GM12878 (cell line): ENCODE measurements at regions of chr16 and their contacts with region 1.

Region 1: GRCh38 chr16:9929313-9929712 is 252.9 kb downstream of the GRIN2A start:
- DNase-seq: peak; percentile 52
- ATAC-seq: peak; percentile 98
- H3K4me3 ChIP-seq: no peak overlapping the region
- H3K27ac ChIP-seq: no peak overlapping the region
- H3K4me1 ChIP-seq: peaks cover 9% of the 10 kb centered on the region
- H3K27me3 ChIP-seq: no peaks in the 10 kb centered on the region
- CTCF ChIP-seq: no peak
- EP300 ChIP-seq: peak; percentile 33 to 80; a peak in 2 of 4 replicates
- POLR2A ChIP-seq: no peak
- RAD21 ChIP-seq: no peak

Region 2: DNA sequence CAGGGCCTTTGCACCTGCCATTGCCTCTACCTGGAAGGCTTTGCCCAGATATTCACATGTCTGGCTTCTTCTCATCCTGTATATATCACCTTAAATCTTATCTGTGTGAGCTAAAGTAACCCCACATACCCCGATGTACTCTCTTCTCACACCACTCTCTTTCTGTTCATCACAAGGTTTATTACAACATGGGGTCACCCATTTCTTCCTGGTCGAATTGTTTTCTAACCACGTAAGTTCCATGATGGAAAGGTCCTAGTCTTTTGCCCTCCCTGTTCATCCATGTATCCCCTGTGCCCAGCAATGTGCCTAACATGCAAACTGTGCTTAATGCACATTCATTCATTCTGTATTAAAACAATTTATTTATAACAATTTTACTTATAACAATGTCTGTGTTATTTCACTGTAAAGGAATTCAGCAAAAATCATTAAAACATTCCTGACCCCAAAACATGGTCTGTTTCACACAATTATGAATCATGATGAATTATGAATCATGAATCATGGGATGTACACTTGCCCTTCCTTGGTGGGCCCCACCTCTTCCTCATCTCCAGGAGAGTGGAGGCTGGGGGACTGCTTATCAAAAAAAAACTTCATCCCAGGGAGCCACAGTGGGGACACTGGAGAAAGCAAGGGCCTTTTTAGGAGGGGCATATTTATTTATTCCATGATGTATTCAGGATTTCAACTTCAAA is 83.5 kb before region 1 on chr16:
- CTCF ChIA-PET with region 1: no interaction called
- POLR2A ChIA-PET with region 1: no interaction called
- RAD21 ChIA-PET with region 1: interaction called, 13 read pairs
- SMC1A ChIA-PET with region 1: interaction called, 7 read pairs
- in situ Hi-C with region 1: no loop called
- intact Hi-C with region 1: no loop called
- DNase-seq: no peak
- ATAC-seq: no peak
- H3K4me3 ChIP-seq: no peak overlapping the region
- H3K27ac ChIP-seq: no peak overlapping the region
- H3K4me1 ChIP-seq: peaks cover 30% of the 10 kb centered on the region
- H3K27me3 ChIP-seq: no peaks in the 10 kb centered on the region
- CTCF ChIP-seq: no peak
- EP300 ChIP-seq: no peak
- POLR2A ChIP-seq: no peak
- RAD21 ChIP-seq: no peak

Region 3: DNA sequence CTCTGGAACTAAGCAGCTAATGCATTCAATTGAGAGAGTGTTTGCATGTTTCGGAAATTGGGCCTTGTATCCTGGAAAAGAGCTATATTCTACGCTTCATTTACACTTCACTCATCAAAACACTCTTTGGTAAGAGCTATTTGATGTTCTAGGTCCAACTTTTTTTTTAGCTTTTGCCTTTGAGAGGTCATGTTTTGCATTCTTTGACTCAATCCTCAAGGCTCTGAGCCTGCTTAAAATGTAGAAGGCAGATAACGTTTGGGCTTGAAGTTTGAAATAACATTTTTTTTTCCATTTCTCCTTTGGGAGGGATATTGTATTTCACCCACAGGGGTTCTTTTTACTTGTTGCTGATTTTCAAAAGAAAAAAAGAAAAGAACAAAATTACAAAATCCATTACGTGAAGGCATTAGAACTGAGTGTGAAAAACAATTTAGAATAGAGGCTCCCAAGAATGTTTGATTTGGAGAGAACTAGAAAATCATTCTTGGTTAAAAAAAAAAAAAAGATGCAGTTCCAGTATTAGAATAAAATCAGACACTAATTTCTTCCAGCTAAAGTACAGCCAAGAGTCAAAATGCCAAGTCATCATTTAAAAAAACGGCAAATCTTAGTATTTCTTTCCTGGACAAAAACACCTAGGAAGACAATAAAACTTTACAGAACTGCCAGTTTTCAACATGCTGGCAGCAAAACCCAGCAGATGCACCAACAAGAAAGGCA is 15.5 kb before region 1 on chr16:
- CTCF ChIA-PET with region 1: interaction called, 9 read pairs
- POLR2A ChIA-PET with region 1: interaction called, 21 read pairs
- RAD21 ChIA-PET with region 1: interaction called, 85 read pairs
- SMC1A ChIA-PET with region 1: interaction called, 101 read pairs
- in situ Hi-C with region 1: no loop called
- intact Hi-C with region 1: no loop called
- DNase-seq: no peak
- ATAC-seq: no peak; the same call in 2 of the 3 replicates
- H3K4me3 ChIP-seq: no peak overlapping the region
- H3K27ac ChIP-seq: peak overlapping the region; percentile 63
- H3K4me1 ChIP-seq: peaks cover 17% of the 10 kb centered on the region
- H3K27me3 ChIP-seq: no peaks in the 10 kb centered on the region
- CTCF ChIP-seq: no peak
- EP300 ChIP-seq: no peak
- POLR2A ChIP-seq: no peak
- RAD21 ChIP-seq: no peak

Region 4: GRCh38 chr16:9946022-9946720 is 16.9 kb after region 1 on chr16:
- CTCF ChIA-PET with region 1: interaction called, 11 read pairs
- POLR2A ChIA-PET with region 1: interaction called, 3 read pairs
- RAD21 ChIA-PET with region 1: interaction called, 12 read pairs
- SMC1A ChIA-PET with region 1: interaction called, 52 read pairs
- in situ Hi-C with region 1: no loop called
- intact Hi-C with region 1: no loop called
- DNase-seq: no peak
- ATAC-seq: peak; percentile 77
- H3K4me3 ChIP-seq: no peak overlapping the region
- H3K27ac ChIP-seq: no peak overlapping the region
- H3K4me1 ChIP-seq: no peaks in the 10 kb centered on the region
- H3K27me3 ChIP-seq: no peaks in the 10 kb centered on the region
- CTCF ChIP-seq: peak; percentile 29 to 34 (median 31); a peak in 4 of 6 replicates
- EP300 ChIP-seq: no peak
- POLR2A ChIP-seq: no peak
- RAD21 ChIP-seq: peak; percentile 66

Region 5: GRCh38 chr16:9976601-9977000 is 47.3 kb after region 1 on chr16:
- CTCF ChIA-PET with region 1: interaction called, 3 read pairs
- POLR2A ChIA-PET with region 1: no interaction called
- RAD21 ChIA-PET with region 1: interaction called, 4 read pairs
- SMC1A ChIA-PET with region 1: interaction called, 10 read pairs
- in situ Hi-C with region 1: no loop called
- intact Hi-C with region 1: no loop called
- DNase-seq: no peak
- ATAC-seq: no peak
- H3K4me3 ChIP-seq: no peak overlapping the region
- H3K27ac ChIP-seq: no peak overlapping the region
- H3K4me1 ChIP-seq: no peaks in the 10 kb centered on the region
- H3K27me3 ChIP-seq: no peaks in the 10 kb centered on the region
- CTCF ChIP-seq: no peak
- EP300 ChIP-seq: no peak
- POLR2A ChIP-seq: no peak
- RAD21 ChIP-seq: no peak